ENCODE measurements at regions of chr2 and their contacts with region 1.

Region 1: DNA sequence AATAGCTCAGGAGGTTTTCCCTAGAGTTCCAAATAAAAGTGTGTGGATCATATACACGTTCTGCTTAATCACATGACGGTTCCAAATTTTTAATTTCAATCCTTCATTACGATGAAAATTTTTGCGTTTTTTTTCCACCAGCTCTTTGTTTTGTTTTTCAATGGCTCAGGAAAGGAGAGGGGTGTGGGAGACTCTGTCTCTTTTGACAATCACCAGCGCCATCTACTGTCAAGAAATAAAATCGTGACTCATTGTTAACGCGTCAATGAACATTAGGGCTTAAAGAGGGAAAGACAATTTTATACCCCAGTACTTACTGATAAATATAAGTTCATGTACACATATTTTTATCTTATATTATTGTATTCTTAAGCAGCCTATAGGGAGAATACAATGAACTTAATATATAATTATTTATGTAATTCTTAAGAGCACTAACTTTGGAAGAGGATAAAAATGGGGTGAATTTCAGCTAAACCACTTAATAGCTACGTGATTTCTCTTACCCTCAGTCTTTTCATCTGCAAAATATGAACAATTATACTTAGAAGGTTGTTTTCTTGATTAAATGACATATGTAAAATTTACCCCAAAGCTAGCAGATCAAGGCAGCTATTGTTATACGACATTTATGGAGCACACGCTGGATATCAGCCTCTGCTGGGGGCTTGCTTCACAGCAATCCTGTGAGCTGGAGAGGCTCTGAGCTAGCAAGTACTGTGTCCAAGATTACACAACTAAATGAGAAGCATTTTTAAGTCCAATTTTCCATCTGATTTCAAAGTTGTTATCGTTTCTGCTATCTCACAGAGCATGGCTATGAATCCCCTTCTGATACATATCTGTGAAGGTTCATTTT is 47.4 kb upstream of the RMDN2 start:
- DNase-seq: no peak
- ATAC-seq: peak; percentile 76
- H3K4me3 Mint-ChIP-seq: no peak overlapping the region
- H3K27ac Mint-ChIP-seq: no peak overlapping the region
- H3K4me1 Mint-ChIP-seq: peaks cover 20% of the 10 kb centered on the region
- H3K27me3 Mint-ChIP-seq: peaks cover 12% of the 10 kb centered on the region
- CTCF ChIP-seq: peak; percentile 85

Region 2: DNA sequence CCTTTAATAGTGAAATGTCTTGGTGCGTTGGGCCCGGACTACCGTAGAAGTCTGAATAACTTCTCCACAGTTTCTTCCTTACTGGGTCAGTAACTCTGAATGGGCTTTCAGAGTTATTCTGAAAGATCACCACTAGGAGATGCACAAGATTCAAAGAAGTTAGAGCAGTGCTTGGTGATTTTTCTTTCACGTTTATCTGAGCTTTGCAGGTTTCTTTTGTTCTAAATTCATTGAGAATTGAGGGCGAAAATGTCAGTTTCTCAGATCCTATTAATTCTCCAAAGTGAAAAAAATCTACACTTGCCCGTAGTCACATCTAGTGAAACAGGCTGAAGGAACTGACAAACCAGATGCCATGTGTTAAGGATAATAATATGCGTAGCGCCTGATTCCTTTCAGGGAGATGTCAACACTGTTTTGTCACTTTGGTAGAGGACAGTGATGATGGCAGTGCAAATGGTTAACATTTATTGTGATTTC is 463.2 kb before region 1 on chr2:
- CTCF ChIA-PET with region 1: interaction called, 110 read pairs
- POLR2A ChIA-PET with region 1: interaction called, 5 read pairs
- intact Hi-C with region 1: loop called (anchors 5 kb)
- DNase-seq: no peak
- ATAC-seq: peak; percentile 53
- H3K4me3 Mint-ChIP-seq: no peak overlapping the region
- H3K27ac Mint-ChIP-seq: no peak overlapping the region
- H3K4me1 Mint-ChIP-seq: peaks cover 12% of the 10 kb centered on the region
- H3K27me3 Mint-ChIP-seq: no peaks in the 10 kb centered on the region
- CTCF ChIP-seq: peak; percentile 75

Region 3: DNA sequence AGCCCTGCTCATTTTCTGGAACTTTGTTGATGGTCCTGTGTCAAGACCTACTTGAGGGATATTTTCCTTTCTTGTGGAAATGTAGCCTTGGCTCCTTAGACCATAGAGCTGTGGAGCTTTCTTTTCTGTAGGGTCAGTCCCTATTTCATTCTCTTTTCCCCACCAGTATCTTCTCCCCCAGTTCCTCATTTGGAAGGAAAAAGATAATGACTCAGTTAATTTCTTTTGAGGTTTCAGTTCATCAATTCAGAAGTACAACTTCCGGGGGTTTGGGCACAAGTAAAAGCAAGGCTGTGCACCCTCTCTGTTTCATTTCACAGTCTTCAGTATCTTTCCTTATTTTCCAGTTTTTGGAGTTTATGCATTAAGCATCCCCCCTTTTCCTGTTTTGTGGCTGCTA is 277.0 kb before region 1 on chr2:
- CTCF ChIA-PET with region 1: interaction called, 13 read pairs
- POLR2A ChIA-PET with region 1: no interaction called
- intact Hi-C with region 1: no loop called
- DNase-seq: no peak
- ATAC-seq: peak; percentile 48
- H3K4me3 Mint-ChIP-seq: peak overlapping the region; percentile 71
- H3K27ac Mint-ChIP-seq: peak overlapping the region; percentile 92
- H3K4me1 Mint-ChIP-seq: peaks cover 52% of the 10 kb centered on the region
- H3K27me3 Mint-ChIP-seq: no peaks in the 10 kb centered on the region
- CTCF ChIP-seq: no peak

Region 4: GRCh38 chr2:37672104-37672869 is 205.4 kb before region 1 on chr2:
- CTCF ChIA-PET with region 1: interaction called, 12 read pairs
- POLR2A ChIA-PET with region 1: no interaction called
- intact Hi-C with region 1: loop called (anchors 10 kb)
- DNase-seq: peak; percentile 80
- ATAC-seq: peak; percentile 49
- H3K4me3 Mint-ChIP-seq: peak overlapping the region; percentile 84
- H3K27ac Mint-ChIP-seq: peak overlapping the region; percentile 88
- H3K4me1 Mint-ChIP-seq: peaks cover 39% of the 10 kb centered on the region
- H3K27me3 Mint-ChIP-seq: no peaks in the 10 kb centered on the region
- CTCF ChIP-seq: no peak

Region 5: GRCh38 chr2:37825586-37825985 is 52.1 kb before region 1 on chr2:
- CTCF ChIA-PET with region 1: interaction called, 184 read pairs
- POLR2A ChIA-PET with region 1: no interaction called
- intact Hi-C with region 1: loop called (anchors 5 kb)
- DNase-seq: no peak
- ATAC-seq: no peak
- H3K4me3 Mint-ChIP-seq: no peak overlapping the region
- H3K27ac Mint-ChIP-seq: no peak overlapping the region
- H3K4me1 Mint-ChIP-seq: peaks cover 14% of the 10 kb centered on the region
- H3K27me3 Mint-ChIP-seq: no peaks in the 10 kb centered on the region
- CTCF ChIP-seq: no peak

Region 6: GRCh38 chr2:37890893-37891495 is 13.3 kb after region 1 on chr2:
- CTCF ChIA-PET with region 1: interaction called, 36 read pairs
- POLR2A ChIA-PET with region 1: no interaction called
- intact Hi-C with region 1: no loop called
- DNase-seq: peak; percentile 77
- ATAC-seq: peak; percentile 77
- H3K4me3 Mint-ChIP-seq: no peak overlapping the region
- H3K27ac Mint-ChIP-seq: no peak overlapping the region
- H3K4me1 Mint-ChIP-seq: peaks cover 36% of the 10 kb centered on the region
- H3K27me3 Mint-ChIP-seq: peaks cover 3% of the 10 kb centered on the region
- CTCF ChIP-seq: peak; percentile 87

Region 7: DNA sequence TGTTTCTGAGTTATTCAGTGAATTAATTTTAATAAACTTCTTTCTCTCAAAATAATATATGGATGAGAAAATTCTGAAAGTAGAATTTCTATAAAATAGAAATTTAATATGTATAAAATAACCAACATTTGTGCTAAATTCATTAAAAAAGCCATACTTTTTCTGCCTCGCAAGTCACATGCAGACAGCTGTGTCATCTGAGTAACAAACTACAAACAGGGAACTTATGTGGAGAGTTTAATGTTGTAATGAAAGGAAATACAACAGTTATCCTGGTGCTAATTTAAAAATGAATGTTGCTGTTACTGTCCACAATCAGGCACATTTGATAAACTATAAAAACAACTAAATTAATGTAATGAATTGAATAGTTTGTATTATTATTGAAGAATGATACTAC is 69.6 kb after region 1 on chr2:
- CTCF ChIA-PET with region 1: no interaction called
- POLR2A ChIA-PET with region 1: no interaction called
- intact Hi-C with region 1: no loop called
- DNase-seq: no peak
- ATAC-seq: no peak
- H3K4me3 Mint-ChIP-seq: no peak overlapping the region
- H3K27ac Mint-ChIP-seq: no peak overlapping the region
- H3K4me1 Mint-ChIP-seq: no peaks in the 10 kb centered on the region
- H3K27me3 Mint-ChIP-seq: no peaks in the 10 kb centered on the region
- CTCF ChIP-seq: no peak

Region 8: GRCh38 chr2:38581193-38582147 is 703.8 kb after region 1 on chr2:
- CTCF ChIA-PET with region 1: no interaction called
- POLR2A ChIA-PET with region 1: no interaction called
- intact Hi-C with region 1: no loop called
- DNase-seq: peak; percentile 58
- ATAC-seq: peak; percentile 85
- H3K4me3 Mint-ChIP-seq: no peak overlapping the region
- H3K27ac Mint-ChIP-seq: peak overlapping the region; percentile 27
- H3K4me1 Mint-ChIP-seq: peaks cover 21% of the 10 kb centered on the region
- H3K27me3 Mint-ChIP-seq: no peaks in the 10 kb centered on the region
- CTCF ChIP-seq: peak; percentile 80

Measured in activated CD8-positive, alpha-beta T cell treated with anti-CD3 and anti-CD28 coated beads for 36 hours (primary cell).